Activated CD4-positive, alpha-beta T cell treated with anti-CD3 and anti-CD28 coated beads for 36 hours (primary cell): ENCODE measurements at regions of chr7 and their contacts with region 1.

Region 1: DNA sequence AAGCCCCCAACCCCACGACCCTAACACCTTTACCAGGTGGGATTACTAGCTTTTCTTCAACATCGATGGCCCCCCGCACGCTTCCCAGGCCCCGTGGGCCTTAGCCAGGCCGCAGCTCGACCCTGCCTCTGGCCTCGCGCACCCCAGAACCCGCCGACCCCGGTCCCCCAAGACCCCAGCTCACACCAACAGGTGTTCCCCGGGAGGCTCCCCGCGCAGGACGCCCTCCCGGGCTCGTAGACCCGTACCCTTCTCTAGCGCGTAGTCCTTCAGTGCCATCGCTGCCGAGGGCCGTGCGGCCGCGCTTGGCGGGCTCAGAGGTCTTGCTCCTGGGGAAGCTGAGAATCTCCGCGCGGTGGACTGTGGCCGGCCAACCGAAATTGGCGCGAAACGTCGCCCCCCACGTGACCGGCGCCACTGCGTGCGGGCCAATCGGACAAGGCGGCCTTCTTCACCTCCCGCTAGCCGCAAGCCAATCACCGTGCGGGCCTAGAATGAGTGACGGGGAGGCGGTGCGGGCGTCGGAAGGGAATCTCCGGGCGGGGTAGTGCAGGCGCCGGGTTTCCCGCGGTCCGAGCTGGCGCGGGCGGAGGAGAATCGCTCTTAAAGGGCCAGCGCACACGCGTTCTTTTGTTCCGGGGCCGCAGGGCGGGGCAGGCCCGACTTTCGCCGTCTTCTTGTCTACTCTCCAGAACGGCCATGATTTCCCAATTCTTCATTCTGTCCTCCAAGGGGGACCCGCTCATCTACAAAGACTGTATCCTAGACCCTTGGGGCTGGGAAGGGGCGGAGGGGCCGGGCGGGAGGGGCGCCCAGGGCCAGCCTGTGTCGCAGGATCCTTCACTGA is at the starts of genes AP4M1 and MCM7:
- DNase-seq: peak; percentile 99
- ATAC-seq: peak; percentile 91
- H3K4me3 Mint-ChIP-seq: peak within 1 kb of the TSS; percentile 90
- H3K27ac Mint-ChIP-seq: peak within 1 kb of the TSS; percentile 94
- H3K4me1 Mint-ChIP-seq: peaks cover 41% of the 10 kb centered on the region
- H3K27me3 Mint-ChIP-seq: no peaks in the 10 kb centered on the region
- total RNA-seq, gene AP4M1: 8.8 to 10.4 TPM
- total RNA-seq, gene MCM7: 411 to 429 TPM

Region 2: GRCh38 chr7:100088621-100089457 is 12.4 kb before region 1 on chr7 and contains the start of gene COPS6:
- CTCF ChIA-PET with region 1: interaction called, 8 read pairs
- POLR2A ChIA-PET with region 1: interaction called, 74 read pairs
- intact Hi-C with region 1: loop called (anchors 1 kb)
- DNase-seq: peak; percentile 92
- ATAC-seq: peak; percentile 67
- H3K4me3 Mint-ChIP-seq: peak within 1 kb of the TSS; percentile 89
- H3K27ac Mint-ChIP-seq: peak within 1 kb of the TSS; percentile 96
- H3K4me1 Mint-ChIP-seq: peaks cover 25% of the 10 kb centered on the region
- H3K27me3 Mint-ChIP-seq: no peaks in the 10 kb centered on the region
- total RNA-seq, gene COPS6: 88.6 to 89.0 TPM